GM12878 (cell line): ENCODE measurements at regions of chr16 and their contacts with region 1.

Region 1: GRCh38 chr16:21719283-21719682 is 55.5 kb downstream of the OTOA start:
- DNase-seq: no peak
- ATAC-seq: no peak
- H3K4me3 ChIP-seq: no peak overlapping the region
- H3K27ac ChIP-seq: no peak overlapping the region
- H3K4me1 ChIP-seq: peaks cover 3% of the 10 kb centered on the region
- H3K27me3 ChIP-seq: no peaks in the 10 kb centered on the region
- CTCF ChIP-seq: no peak
- EP300 ChIP-seq: no peak
- POLR2A ChIP-seq: no peak
- RAD21 ChIP-seq: no peak

Region 2: DNA sequence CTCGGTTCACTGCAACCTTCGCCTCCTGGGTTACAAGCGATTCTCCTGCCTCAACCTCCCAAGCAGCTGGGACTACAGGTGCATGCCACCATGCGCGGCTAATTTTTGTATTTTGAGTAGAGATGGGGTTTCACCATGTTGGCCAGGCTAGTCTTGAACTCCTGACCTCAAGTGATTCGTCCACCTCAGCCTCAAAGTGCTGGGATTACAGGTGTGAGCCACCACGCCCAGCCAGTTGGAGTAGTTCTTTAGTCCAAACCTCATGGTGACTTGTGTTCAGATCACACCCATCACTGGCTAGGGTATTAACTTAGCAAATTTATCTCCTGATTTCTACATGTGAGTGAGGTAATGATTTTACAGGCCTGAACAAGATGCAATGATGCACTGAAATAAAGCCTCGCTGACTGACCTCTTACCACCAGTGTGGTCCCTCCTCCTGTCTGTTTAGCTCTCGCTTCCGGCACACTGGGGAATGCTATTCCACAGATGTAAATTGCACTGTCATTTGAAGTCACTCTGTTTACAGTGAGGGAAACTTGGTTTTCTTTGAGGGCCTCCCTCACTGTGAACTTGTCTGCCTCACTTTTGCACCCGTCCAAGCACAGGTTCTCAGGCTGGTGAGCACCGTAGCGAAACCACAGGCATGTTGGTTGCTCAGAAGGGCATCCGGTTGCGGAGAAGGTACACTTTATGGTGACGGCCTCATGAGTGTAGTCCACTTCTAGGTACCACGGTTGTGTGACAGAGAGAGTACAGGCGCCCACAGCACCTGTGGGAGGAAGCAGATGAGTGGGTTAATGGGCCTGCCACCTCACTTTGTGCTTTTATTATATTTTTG is 72.3 kb before region 1 on chr16:
- CTCF ChIA-PET with region 1: interaction called, 11 read pairs
- POLR2A ChIA-PET with region 1: no interaction called
- RAD21 ChIA-PET with region 1: interaction called, 9 read pairs
- SMC1A ChIA-PET with region 1: interaction called, 4 read pairs
- in situ Hi-C with region 1: no loop called
- intact Hi-C with region 1: no loop called
- DNase-seq: peak; percentile 99
- ATAC-seq: peak; percentile 91
- H3K4me3 ChIP-seq: no peak overlapping the region
- H3K27ac ChIP-seq: peak overlapping the region; percentile 88
- H3K4me1 ChIP-seq: peaks cover 33% of the 10 kb centered on the region
- H3K27me3 ChIP-seq: no peaks in the 10 kb centered on the region
- CTCF ChIP-seq: no peak
- EP300 ChIP-seq: peak; percentile 36 to 74; a peak in 3 of 4 replicates
- POLR2A ChIP-seq: no peak
- RAD21 ChIP-seq: no peak

Region 3: DNA sequence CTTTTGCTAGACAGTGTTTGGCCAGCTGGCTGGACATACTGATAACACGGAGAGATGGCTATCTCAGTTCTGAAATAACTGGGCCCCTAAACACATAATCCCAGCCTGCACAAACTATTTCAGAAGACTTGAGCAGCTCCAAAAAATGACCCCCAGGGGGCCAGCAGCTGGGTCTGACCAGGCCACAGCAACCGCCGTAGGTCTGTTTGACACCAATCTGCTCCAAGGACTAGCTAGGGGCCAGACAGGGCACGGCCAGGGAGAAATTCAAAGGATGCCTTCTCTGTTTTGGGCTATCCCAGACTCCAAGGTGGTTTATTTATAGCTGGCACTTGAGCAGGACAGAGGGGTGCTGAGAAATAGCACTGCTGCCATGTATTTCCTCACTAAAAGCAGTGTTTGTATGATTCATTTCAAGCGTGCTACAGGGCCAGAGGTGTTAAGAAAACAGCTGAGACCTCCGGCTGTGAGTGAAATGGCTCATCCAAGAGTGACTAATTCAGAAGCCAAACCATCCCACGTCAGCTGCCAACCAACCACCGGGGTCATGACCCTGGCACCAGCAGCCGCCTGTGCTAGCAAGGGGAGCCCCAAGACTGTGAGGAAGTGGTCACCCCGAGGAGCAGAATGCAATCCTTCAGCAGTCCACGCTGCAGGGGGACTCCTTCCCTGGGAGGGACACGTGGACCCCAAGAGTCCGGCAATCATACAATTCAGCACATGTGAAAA is 1785.3 kb after region 1 on chr16:
- CTCF ChIA-PET with region 1: no interaction called
- POLR2A ChIA-PET with region 1: no interaction called
- RAD21 ChIA-PET with region 1: no interaction called
- SMC1A ChIA-PET with region 1: no interaction called
- in situ Hi-C with region 1: no loop called
- intact Hi-C with region 1: no loop called
- DNase-seq: peak; percentile 77
- ATAC-seq: peak; percentile 76
- H3K4me3 ChIP-seq: peak overlapping the region; percentile 68
- H3K27ac ChIP-seq: peak overlapping the region; percentile 86
- H3K4me1 ChIP-seq: peaks cover 48% of the 10 kb centered on the region
- H3K27me3 ChIP-seq: no peaks in the 10 kb centered on the region
- CTCF ChIP-seq: 0 out of 6 replicates have a peak, but pooled peaks of 1 of the 3 experiments have one; percentile 23
- EP300 ChIP-seq: peak; percentile 73 to 86; a peak in 3 of 4 replicates
- POLR2A ChIP-seq: peak; percentile 31; the same call in 1 of the 2 replicates
- RAD21 ChIP-seq: no peak